Lower lobe of right lung (tissue), 2 donors: ENCODE measurements at regions of chr6 and their contacts with region 1.

Region 1: GRCh38 chr6:42901536-42901957 is 14.3 kb upstream of the PTCRA start:
- DNase-seq: peak; percentile 83
- ATAC-seq: peak; percentile 98 to 100
- H3K4me3 ChIP-seq: peak overlapping the region; percentile 7
- H3K27ac ChIP-seq: no peak overlapping the region
- H3K4me1 ChIP-seq: peaks cover 17% of the 10 kb centered on the region
- H3K27me3 ChIP-seq: no peaks in the 10 kb centered on the region
- CTCF ChIP-seq: peak; percentile 91

Region 2: DNA sequence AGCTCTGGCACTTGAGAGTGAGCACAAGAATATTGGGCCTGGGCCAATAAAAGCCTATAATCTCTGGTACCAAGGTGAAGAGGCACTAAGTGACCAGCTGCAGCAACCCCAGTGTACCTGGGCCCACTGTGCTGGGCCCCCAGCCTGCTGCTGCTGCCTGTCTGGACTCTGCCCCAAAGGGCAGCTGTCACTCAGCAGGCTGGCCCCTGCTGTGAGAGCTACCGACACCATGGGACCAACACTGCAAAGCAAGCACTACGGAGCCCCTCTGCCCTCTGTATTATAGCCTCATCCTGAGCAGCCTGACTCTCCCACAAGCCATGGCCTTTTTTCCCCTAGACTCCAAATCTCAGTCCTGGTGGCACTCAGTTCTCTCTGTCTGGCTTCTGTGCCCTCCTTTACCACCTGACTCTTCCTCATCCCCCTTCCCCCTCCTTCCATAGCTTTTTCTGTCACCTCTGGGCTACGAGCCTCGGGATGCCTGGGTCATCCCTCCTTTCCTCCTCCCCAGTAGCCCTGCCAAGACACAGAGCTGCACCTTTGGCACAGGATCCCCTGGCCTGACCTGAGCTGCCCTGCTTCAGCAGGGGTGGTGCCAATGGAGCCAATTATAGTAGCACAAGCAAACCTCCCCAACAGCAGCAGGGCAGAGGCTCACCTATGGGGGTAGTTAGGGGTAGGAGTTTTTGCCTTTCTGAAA is 134.1 kb after region 1 on chr6:
- intact Hi-C with region 1: no loop called
- DNase-seq: no peak
- ATAC-seq: peak in 1 of 2 donors; percentile 5
- H3K4me3 ChIP-seq: no peak overlapping the region
- H3K27ac ChIP-seq: no peak overlapping the region
- H3K4me1 ChIP-seq: no peaks in the 10 kb centered on the region
- H3K27me3 ChIP-seq: no peaks in the 10 kb centered on the region
- CTCF ChIP-seq: no peak

Region 3: DNA sequence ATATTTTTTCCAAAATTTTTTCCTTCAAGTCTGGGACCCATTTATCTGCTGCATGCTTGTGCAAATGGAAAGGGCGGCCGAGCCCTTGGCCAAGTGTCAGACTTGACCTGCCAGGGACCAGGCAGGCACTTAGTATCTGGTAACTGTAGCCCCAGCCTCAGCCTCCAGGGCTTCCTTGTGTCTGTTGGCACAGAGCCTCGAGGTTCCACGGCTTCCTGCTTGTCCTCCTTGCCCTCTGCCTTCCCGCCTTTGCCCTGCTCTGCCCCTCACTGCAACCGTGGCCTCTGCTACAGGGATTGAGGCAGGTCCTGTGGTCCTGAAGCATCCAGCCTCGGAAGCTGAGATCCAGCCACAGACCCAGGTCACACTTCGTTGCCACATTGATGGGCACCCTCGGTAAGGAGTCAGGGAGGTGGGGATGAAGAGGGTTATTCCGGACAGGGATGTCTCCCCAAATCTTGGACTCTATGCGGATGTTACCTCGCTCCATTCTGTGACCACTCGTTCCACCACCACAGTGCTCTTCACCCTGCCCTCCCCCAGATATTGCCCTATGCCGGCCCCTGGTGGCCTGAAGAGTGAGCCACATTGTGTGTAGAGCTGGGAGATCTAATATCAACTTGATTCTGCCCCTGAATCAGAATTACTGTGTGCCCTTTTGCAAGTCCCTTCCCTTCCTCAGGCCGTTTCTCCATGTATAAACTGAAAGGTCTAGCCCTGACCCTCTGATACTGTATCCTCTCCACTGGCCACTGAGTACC is 228.1 kb after region 1 on chr6:
- intact Hi-C with region 1: loop called (anchors 10 kb)
- DNase-seq: no peak
- ATAC-seq: peak; percentile 68 to 76
- H3K4me3 ChIP-seq: no peak overlapping the region
- H3K27ac ChIP-seq: no peak overlapping the region
- H3K4me1 ChIP-seq: peaks cover 18% of the 10 kb centered on the region
- H3K27me3 ChIP-seq: no peaks in the 10 kb centered on the region
- CTCF ChIP-seq: peak; percentile 51